ENCODE measurements at regions of chr11 and their contacts with region 1.

Region 1: DNA sequence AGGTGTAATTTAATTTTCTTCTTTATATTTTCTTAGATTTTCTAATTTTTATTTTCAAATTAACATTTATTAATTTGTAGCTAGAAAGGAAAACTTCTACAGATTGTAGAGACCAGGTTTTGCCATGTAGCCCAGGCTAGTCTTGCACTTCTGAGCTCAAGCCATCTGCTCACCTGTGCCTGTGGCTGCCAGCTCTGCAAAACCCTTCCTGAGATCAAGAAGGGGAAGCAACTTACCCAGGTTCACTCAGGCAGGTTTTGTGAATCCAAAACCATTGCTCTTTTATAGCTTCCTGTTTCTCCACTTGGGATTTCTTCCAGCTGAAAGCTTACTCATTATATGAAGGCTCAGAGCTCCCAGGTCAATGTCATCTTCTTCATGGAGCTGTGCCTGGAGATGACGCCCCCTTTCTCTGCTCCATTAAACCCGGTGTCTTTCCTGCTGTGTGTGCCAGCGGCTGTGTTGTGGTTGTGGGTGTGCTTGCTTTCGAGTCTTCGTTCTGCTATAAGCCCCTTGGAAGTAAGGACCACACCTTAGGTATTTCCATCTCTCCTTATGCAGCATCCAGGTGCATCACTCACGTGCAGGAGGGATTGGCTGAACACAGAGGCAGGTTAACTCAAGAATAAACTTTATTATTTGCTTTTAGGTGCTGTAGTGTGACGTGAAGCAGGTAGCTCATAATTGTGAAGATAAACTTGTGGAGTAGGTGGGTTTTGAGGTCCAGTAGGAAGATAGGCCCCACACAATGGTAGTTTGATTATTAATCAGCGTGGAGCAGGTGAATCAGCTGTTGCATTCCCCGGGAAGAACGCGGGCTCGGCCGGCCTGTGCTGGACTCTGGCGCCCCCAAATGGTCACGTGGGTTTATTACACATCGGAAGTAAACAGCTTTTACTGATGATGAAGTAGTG is 42.2 kb upstream of the INCENP start:
- DNase-seq: no peak
- H3K4me3 ChIP-seq: no peak overlapping the region
- CTCF ChIP-seq: peak; percentile 80

Region 2: GRCh38 chr11:61816736-61817455 is 264.7 kb before region 1 on chr11 and contains the start of gene FADS1:
- CTCF ChIA-PET with region 1: interaction called, 10 read pairs
- POLR2A ChIA-PET with region 1: no interaction called
- DNase-seq: peak; percentile 60
- H3K4me3 ChIP-seq: peak within 1 kb of the TSS; percentile 82
- CTCF ChIP-seq: peak; percentile 89

Region 3: DNA sequence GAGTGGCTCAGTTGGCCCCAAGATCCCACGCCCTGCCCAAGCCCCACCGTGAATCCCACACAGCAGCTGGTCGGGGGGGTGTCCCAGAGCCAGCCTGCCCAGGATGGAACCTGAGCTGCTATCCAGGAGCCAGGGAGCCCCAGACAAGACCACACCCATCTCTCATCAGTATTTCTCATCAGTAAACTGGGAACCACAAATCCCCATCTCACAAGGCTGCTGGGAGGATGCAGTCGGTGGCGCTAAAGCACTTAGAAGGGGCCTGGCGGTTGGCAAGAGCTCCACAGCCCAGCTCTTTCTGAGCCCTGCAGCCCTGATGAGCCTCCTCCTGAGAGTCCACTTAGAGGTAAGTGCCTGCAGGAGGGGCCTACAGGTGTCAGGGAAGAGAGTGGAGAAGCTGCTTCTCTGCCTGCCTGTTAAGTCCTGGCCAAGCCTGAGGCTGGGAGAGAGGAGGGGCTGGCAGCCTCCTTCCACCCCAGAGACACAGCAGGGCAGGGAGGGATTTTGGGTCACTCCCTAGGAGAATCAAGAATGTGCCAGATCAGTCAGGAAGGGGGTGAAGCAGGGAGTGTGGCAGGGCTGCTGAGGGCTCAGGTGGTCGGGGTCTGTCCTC is 196.4 kb before region 1 on chr11:
- CTCF ChIA-PET with region 1: interaction called, 406 read pairs
- POLR2A ChIA-PET with region 1: no interaction called
- DNase-seq: no peak
- H3K4me3 ChIP-seq: no peak overlapping the region
- CTCF ChIP-seq: no peak

Region 4: GRCh38 chr11:61947486-61948210 is 134.0 kb before region 1 on chr11:
- CTCF ChIA-PET with region 1: interaction called, 206 read pairs
- POLR2A ChIA-PET with region 1: no interaction called
- DNase-seq: no peak
- H3K4me3 ChIP-seq: no peak overlapping the region
- CTCF ChIP-seq: peak; percentile 94

Region 5: DNA sequence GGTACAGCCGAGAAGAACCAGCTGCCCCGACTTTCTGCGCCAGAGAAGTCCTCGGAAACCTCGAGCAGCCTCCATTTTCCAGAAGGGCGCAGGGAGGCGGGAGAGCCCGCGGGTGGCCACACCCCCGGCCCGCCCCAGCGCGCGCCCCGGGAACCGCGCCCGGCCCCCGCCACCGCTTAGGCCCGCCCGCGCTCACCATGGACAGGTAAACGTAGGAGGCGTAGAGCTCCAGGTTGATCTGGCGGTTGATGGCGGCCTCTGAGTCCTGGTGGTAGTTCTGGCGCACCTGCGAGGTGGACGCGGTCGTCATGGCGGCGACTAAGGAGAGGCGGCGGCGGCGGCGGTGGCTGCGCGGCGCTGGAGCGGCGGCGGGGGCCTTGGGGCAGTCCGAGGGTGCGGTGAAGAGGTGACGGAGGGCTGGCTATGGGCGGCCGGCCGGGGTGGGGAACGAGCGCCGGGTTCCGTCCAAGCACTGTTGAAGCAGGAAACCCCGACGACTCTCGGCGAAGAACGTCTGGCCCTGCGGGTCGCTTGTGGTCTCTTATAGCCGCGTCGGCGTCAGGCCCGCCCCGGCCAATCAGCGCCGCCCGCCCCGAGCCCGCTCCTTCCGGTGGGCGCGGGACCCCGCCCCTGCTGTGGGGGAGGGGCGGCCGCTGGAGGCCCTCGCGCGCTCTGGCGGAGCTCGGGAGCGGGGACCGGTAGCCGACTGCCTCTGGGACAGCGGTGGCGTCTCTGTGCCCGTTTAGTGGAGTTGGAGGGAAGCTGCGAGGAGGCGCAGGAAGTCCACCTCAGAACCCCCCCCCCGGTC is 114.3 kb before region 1 on chr11 and contains the start of gene FTH1:
- CTCF ChIA-PET with region 1: interaction called, 146 read pairs
- POLR2A ChIA-PET with region 1: interaction called, 17 read pairs
- DNase-seq: no peak
- H3K4me3 ChIP-seq: peak within 1 kb of the TSS; percentile 98
- CTCF ChIP-seq: no peak

Region 6: GRCh38 chr11:62061351-62062222 is 20.0 kb before region 1 on chr11:
- CTCF ChIA-PET with region 1: interaction called, 15 read pairs
- POLR2A ChIA-PET with region 1: no interaction called
- DNase-seq: no peak
- H3K4me3 ChIP-seq: no peak overlapping the region
- CTCF ChIP-seq: no peak